MCF 10A (cell line): ENCODE measurements at regions of chr4 and their contacts with region 1.

Region 1: GRCh38 chr4:473570-474457 is 25.1 kb downstream of the ZNF721 start:
- DNase-seq: peak; percentile 100
- H3K4me3 Mint-ChIP-seq: peak overlapping the region; percentile 99
- H3K27ac Mint-ChIP-seq: peak overlapping the region; percentile 100
- H3K4me1 Mint-ChIP-seq: peaks cover 11% of the 10 kb centered on the region
- H3K27me3 Mint-ChIP-seq: no peaks in the 10 kb centered on the region
- CTCF ChIP-seq: no peak

Region 2: GRCh38 chr4:124275-125081 is 349.3 kb before region 1 on chr4 and contains the start of gene ZNF718:
- CTCF ChIA-PET with region 1: no interaction called
- POLR2A ChIA-PET with region 1: interaction called, 12 read pairs
- intact Hi-C with region 1: no loop called
- DNase-seq: peak; percentile 98
- H3K4me3 Mint-ChIP-seq: peak within 1 kb of the TSS; percentile 91
- H3K27ac Mint-ChIP-seq: peak within 1 kb of the TSS; percentile 98
- H3K4me1 Mint-ChIP-seq: peaks cover 5% of the 10 kb centered on the region
- H3K27me3 Mint-ChIP-seq: no peaks in the 10 kb centered on the region
- CTCF ChIP-seq: no peak
- total RNA-seq, gene ZNF718: 10.8 and 12.2 TPM in 2 replicates

Region 3: DNA sequence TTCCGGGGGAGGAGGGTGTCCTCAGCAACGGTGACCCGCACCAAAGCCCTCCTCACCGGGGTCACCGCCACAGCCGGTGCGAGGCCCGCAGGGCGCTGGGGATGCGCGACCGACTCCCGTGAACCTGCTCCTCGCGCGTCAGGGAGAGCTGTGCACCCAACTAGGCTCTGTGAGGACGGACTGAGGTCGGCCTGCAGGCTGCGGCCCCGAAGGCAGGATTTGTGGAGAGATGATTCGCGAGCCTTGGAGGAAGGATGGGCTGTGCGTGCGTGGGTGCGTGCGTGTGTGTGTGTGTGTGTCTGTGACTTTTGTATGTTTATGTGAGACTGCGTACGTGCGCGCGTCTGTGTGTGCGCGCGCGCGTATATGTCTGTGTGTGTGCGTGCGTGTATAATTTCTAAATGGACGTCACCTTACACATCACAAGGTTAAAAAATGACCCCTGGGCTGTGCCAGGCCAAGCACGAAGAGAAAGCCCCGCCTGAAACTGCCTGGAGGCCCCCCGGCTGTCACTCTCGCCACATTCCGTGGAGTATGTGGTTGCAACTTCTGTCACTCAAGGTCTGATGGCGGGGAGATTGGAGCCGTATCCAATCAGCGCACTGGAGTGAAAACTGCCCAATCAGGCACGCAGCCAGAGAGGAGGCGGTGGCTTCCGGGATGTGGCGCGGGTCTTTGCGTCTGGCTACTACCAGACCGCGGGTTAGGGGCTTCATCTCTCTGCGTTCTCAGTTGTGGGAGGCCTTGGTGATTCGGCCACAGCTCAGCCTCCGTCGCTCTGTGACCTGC is 136.5 kb before region 1 on chr4 and contains the start of gene ZNF141:
- CTCF ChIA-PET with region 1: no interaction called
- POLR2A ChIA-PET with region 1: interaction called, 10 read pairs
- intact Hi-C with region 1: no loop called
- DNase-seq: peak; percentile 98
- H3K4me3 Mint-ChIP-seq: peak within 1 kb of the TSS; percentile 86
- H3K27ac Mint-ChIP-seq: peak within 1 kb of the TSS; percentile 95
- H3K4me1 Mint-ChIP-seq: no peaks in the 10 kb centered on the region
- H3K27me3 Mint-ChIP-seq: no peaks in the 10 kb centered on the region
- CTCF ChIP-seq: no peak
- total RNA-seq, gene ZNF141: 11.3 and 11.6 TPM in 2 replicates

Region 4: DNA sequence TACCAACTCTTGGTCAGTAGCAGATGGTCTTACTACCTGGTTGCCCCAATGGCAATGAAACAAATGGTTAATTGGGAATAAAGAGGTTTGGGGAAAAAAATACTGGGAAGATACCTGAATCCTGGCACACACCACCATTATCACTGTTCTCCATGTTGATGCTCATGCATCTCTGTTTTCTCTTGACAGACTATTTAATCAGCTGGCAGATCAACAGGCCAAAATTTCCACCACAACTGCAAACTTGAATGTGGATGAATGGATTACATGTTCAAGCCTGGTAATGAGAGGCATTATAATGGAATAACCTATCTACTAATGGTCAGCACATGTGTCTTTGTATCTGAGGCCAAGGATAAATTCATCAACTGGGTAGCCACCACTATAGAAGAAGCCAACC is 20.5 kb before region 1 on chr4:
- CTCF ChIA-PET with region 1: no interaction called
- POLR2A ChIA-PET with region 1: interaction called, 14 read pairs
- intact Hi-C with region 1: no loop called
- DNase-seq: no peak
- H3K4me3 Mint-ChIP-seq: no peak overlapping the region
- H3K27ac Mint-ChIP-seq: no peak overlapping the region
- H3K4me1 Mint-ChIP-seq: no peaks in the 10 kb centered on the region
- H3K27me3 Mint-ChIP-seq: no peaks in the 10 kb centered on the region
- CTCF ChIP-seq: no peak

Region 5: DNA sequence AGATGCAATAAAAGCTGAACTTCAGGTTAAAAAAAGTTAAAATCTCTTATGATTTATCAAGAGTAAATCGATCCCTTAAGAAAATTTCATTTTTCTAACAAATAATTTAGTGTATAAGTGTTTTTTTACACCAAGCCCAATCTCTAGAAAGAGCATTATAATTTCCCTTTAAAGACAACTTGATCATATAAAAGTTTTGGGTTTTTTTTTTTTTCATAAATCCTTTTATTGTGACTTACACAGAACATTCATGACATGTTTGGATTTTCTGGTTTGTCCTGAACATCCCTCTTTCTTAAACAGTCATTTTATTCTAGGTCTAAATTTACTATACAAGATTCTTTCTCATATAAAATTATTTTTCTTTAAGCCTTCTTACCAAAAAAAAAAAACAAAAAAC is 18.6 kb after region 1 on chr4:
- CTCF ChIA-PET with region 1: interaction called, 3 read pairs
- POLR2A ChIA-PET with region 1: interaction called, 17 read pairs
- intact Hi-C with region 1: no loop called
- DNase-seq: no peak
- H3K4me3 Mint-ChIP-seq: no peak overlapping the region
- H3K27ac Mint-ChIP-seq: no peak overlapping the region
- H3K4me1 Mint-ChIP-seq: no peaks in the 10 kb centered on the region
- H3K27me3 Mint-ChIP-seq: no peaks in the 10 kb centered on the region
- CTCF ChIP-seq: no peak

Region 6: DNA sequence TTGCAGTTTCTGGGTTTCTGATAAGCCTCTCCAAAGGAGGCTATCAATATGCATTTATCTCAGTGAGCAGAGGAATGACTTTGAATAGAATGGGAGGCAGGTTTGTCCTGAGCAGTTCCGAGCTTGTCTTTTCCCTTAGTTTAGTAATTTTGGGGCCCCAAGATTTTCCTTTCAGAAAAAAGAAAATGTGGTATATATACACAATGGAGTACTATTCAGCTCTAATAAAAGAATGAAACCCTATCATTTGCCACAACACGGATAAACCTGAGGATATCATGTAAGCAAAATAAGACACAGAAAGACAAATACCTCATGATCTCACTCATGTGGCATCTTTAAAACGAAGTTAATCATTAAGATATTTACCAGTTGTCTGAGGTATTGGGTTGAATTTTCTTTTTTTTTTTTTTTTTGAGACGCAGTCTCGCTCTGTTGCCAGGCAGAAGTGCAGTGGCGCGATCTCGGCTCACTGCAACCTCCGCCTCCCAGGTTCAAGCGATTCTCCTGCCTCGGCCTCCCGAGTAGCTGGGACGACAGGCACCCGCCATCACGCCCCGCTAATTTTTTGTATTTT is 24.6 kb after region 1 on chr4:
- CTCF ChIA-PET with region 1: interaction called, 3 read pairs
- POLR2A ChIA-PET with region 1: interaction called, 23 read pairs
- intact Hi-C with region 1: no loop called
- DNase-seq: no peak
- H3K4me3 Mint-ChIP-seq: peak overlapping the region; percentile 98
- H3K27ac Mint-ChIP-seq: peak overlapping the region; percentile 100
- H3K4me1 Mint-ChIP-seq: peaks cover 12% of the 10 kb centered on the region
- H3K27me3 Mint-ChIP-seq: no peaks in the 10 kb centered on the region
- CTCF ChIP-seq: no peak

Region 7: DNA sequence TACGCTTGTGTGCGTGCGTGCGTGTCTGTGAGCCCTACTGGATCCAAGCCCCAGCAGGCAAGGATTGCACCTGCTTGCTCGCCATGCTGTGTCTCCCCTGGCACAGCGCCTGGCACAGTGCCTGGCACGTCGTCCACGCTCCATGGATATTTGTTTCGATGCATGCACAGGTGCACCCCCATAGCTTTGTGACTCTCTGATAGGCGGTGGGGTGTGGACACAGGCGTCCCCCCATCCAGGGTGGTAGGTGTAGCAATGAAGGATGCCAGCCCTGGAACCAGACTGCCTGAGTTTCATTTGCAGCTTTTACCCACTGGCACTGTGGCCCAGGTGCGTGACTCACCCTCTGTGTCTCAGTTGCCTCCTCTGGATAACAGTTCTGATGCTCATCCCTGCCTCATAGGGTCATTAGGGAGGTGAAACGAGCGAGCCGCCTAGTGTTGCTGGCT is 45.4 kb after region 1 on chr4:
- CTCF ChIA-PET with region 1: no interaction called
- POLR2A ChIA-PET with region 1: no interaction called
- intact Hi-C with region 1: no loop called
- DNase-seq: no peak
- H3K4me3 Mint-ChIP-seq: no peak overlapping the region
- H3K27ac Mint-ChIP-seq: no peak overlapping the region
- H3K4me1 Mint-ChIP-seq: no peaks in the 10 kb centered on the region
- H3K27me3 Mint-ChIP-seq: no peaks in the 10 kb centered on the region
- CTCF ChIP-seq: no peak

Region 8: GRCh38 chr4:674172-675035 is 200.6 kb after region 1 on chr4 and contains the starts of genes ATP5ME and MYL5:
- CTCF ChIA-PET with region 1: no interaction called
- POLR2A ChIA-PET with region 1: interaction called, 7 read pairs
- intact Hi-C with region 1: loop called (anchors 10 kb)
- DNase-seq: peak; percentile 96
- H3K4me3 Mint-ChIP-seq: peak within 1 kb of the TSS; percentile 83
- H3K27ac Mint-ChIP-seq: peak within 1 kb of the TSS; percentile 82
- H3K4me1 Mint-ChIP-seq: peaks cover 14% of the 10 kb centered on the region
- H3K27me3 Mint-ChIP-seq: no peaks in the 10 kb centered on the region
- CTCF ChIP-seq: peak; percentile 84
- total RNA-seq, gene ATP5ME: 355 and 389 TPM in 2 replicates
- total RNA-seq, gene MYL5: 30.6 and 32.9 TPM in 2 replicates